ENCODE measurements at regions of chr19 and their contacts with region 1.

Region 1: GRCh38 chr19:39397360-39398296 is 6.5 kb downstream of the MED29 start:
- DNase-seq: peak; percentile 96
- H3K4me3 ChIP-seq: peak overlapping the region in 3 of 4 donors; percentile 8 to 31 (median 13)
- H3K27ac ChIP-seq: peak overlapping the region; percentile 98 to 100 (median 99)
- H3K4me1 ChIP-seq: peaks cover 38 to 56% (median 45%) of the 10 kb centered on the region in 4 donors
- H3K27me3 ChIP-seq: no peaks in the 10 kb centered on the region
- CTCF ChIP-seq: peak; percentile 93 to 99 (median 97)
- EP300 ChIP-seq: peak; percentile 80
- POLR2A ChIP-seq: peak; percentile 93

Region 2: DNA sequence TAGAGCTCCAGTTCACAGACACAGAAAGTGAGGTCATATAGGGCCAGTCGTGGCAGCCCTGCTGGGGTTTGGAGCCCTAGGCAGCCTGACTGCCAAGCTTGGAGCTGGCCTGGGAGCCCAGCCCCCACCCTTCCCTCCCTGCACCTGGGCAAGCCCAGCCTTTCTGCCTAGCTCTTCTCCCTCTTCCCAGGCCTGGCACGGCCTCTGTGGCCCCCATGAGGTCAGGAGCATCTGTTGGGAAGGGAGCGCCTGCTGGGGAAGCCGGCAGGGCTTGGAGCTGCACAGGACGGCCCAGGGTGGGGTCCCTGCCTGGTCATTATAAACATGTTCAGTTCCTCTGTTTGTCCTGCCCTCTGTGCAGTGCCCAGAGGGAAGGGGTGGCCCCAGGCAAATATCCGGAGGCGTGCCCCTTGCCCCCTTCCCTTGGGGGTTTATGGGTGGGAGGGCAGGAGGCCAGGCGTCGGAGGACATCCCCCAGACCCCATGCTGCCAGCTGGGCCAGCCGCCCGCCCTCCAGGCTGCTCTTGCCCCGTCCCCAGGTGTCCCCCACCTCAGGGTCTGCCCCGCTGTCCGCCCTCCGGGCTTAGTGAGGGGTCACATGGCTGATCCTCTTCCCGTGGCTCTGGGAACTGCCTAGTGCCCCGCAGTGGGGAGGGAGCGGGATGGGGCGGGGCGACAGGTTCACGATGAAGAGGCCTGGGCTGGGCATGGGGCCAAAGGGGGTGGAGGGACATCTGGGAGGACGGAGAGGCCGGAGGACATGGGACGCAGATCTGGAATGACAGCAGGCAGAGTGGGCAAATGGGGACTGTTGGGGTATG is 230.8 kb before region 1 on chr19:
- in situ Hi-C with region 1: no loop called
- intact Hi-C with region 1: no loop called
- DNase-seq: peak; percentile 88
- H3K4me3 ChIP-seq: peak overlapping the region in 1 of 4 donors; percentile 11
- H3K27ac ChIP-seq: peak overlapping the region; percentile 22 to 75 (median 30)
- H3K4me1 ChIP-seq: peaks cover 18 to 25% (median 22%) of the 10 kb centered on the region in 4 donors
- H3K27me3 ChIP-seq: no peaks in the 10 kb centered on the region
- CTCF ChIP-seq: no peak
- EP300 ChIP-seq: no peak
- POLR2A ChIP-seq: no peak

Region 3: GRCh38 chr19:39412100-39412866 is 14.7 kb after region 1 on chr19 and contains the start of gene PLEKHG2:
- in situ Hi-C with region 1: no loop called
- intact Hi-C with region 1: loop called (anchors 2 kb)
- DNase-seq: peak; percentile 97
- H3K4me3 ChIP-seq: peak within 1 kb of the TSS; percentile 48 to 86 (median 75)
- H3K27ac ChIP-seq: peak within 1 kb of the TSS; percentile 98 to 100 (median 99)
- H3K4me1 ChIP-seq: peaks cover 11 to 52% (median 40%) of the 10 kb centered on the region in 4 donors
- H3K27me3 ChIP-seq: peaks cover 17% of the 10 kb centered on the region
- CTCF ChIP-seq: peak; percentile 83 to 97 (median 91)
- EP300 ChIP-seq: no peak
- POLR2A ChIP-seq: peak; percentile 95
- total RNA-seq, gene PLEKHG2: 6.1 to 27.7 (median 11.9) TPM

Region 4: GRCh38 chr19:39617745-39618144 is 220.1 kb after region 1 on chr19:
- in situ Hi-C with region 1: no loop called
- intact Hi-C with region 1: no loop called
- DNase-seq: no peak
- H3K4me3 ChIP-seq: no peak overlapping the region
- H3K27ac ChIP-seq: no peak overlapping the region
- H3K4me1 ChIP-seq: no peaks in the 10 kb centered on the region
- H3K27me3 ChIP-seq: peaks cover 20% of the 10 kb centered on the region
- CTCF ChIP-seq: no peak
- EP300 ChIP-seq: no peak
- POLR2A ChIP-seq: no peak